ENCODE measurements at regions of chr13 and their contacts with region 1.

Region 1: DNA sequence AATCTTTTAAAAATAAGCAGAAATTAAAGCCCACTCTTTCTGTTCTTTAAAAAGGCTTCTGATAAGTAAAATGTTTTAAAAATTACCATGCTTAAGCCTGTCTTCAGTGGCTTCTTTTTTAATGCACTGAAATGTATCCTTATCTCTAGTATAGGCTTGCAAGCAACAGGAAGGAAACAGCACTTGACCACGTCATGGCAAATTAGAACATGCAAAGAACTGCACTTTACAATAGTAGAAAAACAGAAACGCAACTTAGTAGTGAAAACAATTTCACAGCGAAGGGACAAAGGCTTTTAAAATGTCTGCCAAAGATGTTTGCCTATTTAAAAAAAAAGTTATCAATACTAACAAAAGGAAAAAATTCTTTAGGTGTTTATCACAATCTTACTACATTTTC is 36.3 kb downstream of the ELF1 start:
- DNase-seq: peak; percentile 78 to 90 (median 84)
- H3K4me3 ChIP-seq: peak overlapping the region; percentile 76 to 90
- H3K4me3 Mint-ChIP-seq: peak overlapping the region; percentile 82 to 98 (median 92)
- H3K27ac ChIP-seq: peak overlapping the region; percentile 82
- H3K27ac Mint-ChIP-seq: peak overlapping the region; percentile 95 to 99 (median 97)
- H3K4me1 ChIP-seq: peaks cover 49% of the 10 kb centered on the region
- H3K4me1 Mint-ChIP-seq: peaks cover 38 to 57% (median 45%) of the 10 kb centered on the region in 4 donors
- H3K27me3 ChIP-seq: no peaks in the 10 kb centered on the region
- H3K27me3 Mint-ChIP-seq: no peaks in the 10 kb centered on the region

Region 2: GRCh38 chr13:40770934-40771618 is 211.7 kb before region 1 on chr13 and contains the start of gene MRPS31:
- CTCF ChIA-PET with region 1: no interaction called
- POLR2A ChIA-PET with region 1: no interaction called
- intact Hi-C with region 1: loop called (anchors 2 kb)
- DNase-seq: peak; percentile 91 to 92 (median 92)
- H3K4me3 ChIP-seq: peak within 1 kb of the TSS; percentile 53 to 97
- H3K4me3 Mint-ChIP-seq: peak within 1 kb of the TSS; percentile 97 to 100 (median 99)
- H3K27ac ChIP-seq: peak within 1 kb of the TSS; percentile 79
- H3K27ac Mint-ChIP-seq: peak within 1 kb of the TSS in 6 of 7 donors; percentile 98 to 100 (median 99)
- H3K4me1 ChIP-seq: peaks cover 28% of the 10 kb centered on the region
- H3K4me1 Mint-ChIP-seq: peaks cover 8 to 33% (median 27%) of the 10 kb centered on the region in 4 donors
- H3K27me3 ChIP-seq: no peaks in the 10 kb centered on the region
- H3K27me3 Mint-ChIP-seq: no peaks in the 10 kb centered on the region
- total RNA-seq, gene MRPS31: 37.7 to 39.5 TPM

Region 3: DNA sequence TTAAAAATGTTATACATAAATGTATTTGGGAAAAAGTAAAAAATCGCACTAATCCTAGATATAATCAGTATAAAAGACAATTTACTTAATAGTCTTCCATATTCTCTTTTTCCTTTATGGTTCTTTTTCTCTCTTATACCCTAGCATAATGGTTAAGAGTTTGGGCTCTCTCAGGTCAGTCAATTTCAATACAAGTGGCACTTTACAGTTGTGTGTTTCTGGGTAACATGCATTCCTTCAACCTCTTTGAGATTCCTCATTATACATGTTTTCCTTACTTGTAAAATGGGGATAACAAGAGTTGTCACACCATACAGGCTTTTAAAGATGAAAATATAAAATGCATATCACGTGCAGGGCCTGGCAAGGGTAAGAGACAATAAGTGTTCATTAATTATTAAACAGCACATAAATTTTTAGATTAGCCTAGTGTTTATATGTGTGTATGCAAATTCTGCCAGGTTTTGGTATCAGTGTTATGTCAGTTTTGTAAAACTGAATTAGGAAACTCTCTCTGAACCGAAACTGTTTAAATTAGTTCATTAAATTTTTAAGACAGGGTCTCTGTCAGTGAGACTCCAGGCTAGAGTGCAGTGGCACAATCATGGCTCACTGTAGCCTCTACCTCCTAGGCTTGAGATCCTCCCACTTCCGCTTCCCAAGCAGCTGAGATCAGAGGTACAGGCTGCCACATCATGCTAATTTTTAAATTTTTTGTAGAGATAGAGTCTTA is 13.4 kb before region 1 on chr13:
- CTCF ChIA-PET with region 1: interaction called, 123 read pairs
- POLR2A ChIA-PET with region 1: interaction called, 37 read pairs
- intact Hi-C with region 1: loop called (anchors 1 kb)
- DNase-seq: peak in 1 of 5 donors; percentile 55
- H3K4me3 ChIP-seq: no peak overlapping the region
- H3K4me3 Mint-ChIP-seq: peak overlapping the region; percentile 24 to 76 (median 70)
- H3K27ac ChIP-seq: no peak overlapping the region
- H3K27ac Mint-ChIP-seq: peak overlapping the region; percentile 23 to 87 (median 70)
- H3K4me1 ChIP-seq: peaks cover 100% of the 10 kb centered on the region
- H3K4me1 Mint-ChIP-seq: peaks cover 75 to 99% (median 87%) of the 10 kb centered on the region in 4 donors
- H3K27me3 ChIP-seq: no peaks in the 10 kb centered on the region
- H3K27me3 Mint-ChIP-seq: no peaks in the 10 kb centered on the region

Region 4: DNA sequence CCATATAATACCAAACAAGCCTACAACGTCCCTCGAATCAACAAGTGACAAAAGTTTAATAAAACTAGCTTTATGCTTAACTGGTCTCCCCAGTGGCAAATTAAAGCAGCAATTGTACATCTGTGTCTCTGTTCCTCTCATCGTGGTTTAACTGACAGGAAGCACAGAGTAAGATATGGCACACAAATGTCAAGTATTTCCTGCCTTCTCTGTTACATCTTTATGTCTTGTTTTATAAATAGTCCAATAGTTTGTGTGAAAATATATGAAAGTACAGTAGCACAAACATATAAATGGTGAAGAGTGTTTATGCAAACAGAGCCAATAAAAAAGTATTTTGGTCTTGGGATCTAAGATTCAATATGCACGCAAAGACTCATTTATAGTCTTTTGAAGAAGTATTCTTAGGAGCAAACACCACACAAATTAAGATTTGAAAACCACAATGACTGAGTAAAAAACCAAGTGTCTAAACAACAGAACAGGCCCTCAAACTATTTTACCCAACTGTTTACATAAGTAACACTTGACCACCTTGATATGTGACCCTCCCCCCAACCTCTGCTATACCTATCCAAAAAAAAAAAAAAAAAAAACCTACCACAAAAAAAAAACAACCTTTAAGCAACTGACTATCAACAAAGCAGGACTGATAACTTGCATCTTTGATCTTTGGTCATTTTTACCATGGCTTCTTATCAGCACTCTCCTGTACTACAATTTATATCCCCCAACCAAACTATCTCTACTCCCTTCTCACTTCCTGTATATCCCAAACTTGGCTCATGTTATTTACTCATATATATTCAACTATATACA is 22.3 kb after region 1 on chr13:
- CTCF ChIA-PET with region 1: interaction called, 5 read pairs
- POLR2A ChIA-PET with region 1: interaction called, 31 read pairs
- intact Hi-C with region 1: loop called (anchors 2 kb)
- DNase-seq: peak; percentile 52 to 72 (median 64)
- H3K4me3 ChIP-seq: peak overlapping the region in 1 of 2 donors; percentile 7
- H3K4me3 Mint-ChIP-seq: peak overlapping the region; percentile 38 to 87 (median 62)
- H3K27ac ChIP-seq: peak overlapping the region; percentile 59
- H3K27ac Mint-ChIP-seq: peak overlapping the region; percentile 73 to 94 (median 90)
- H3K4me1 ChIP-seq: peaks cover 93% of the 10 kb centered on the region
- H3K4me1 Mint-ChIP-seq: peaks cover 49 to 79% (median 60%) of the 10 kb centered on the region in 4 donors
- H3K27me3 ChIP-seq: no peaks in the 10 kb centered on the region
- H3K27me3 Mint-ChIP-seq: no peaks in the 10 kb centered on the region

Region 5: GRCh38 chr13:41263261-41264027 is 280.7 kb after region 1 on chr13 and contains the start of gene MTRF1:
- CTCF ChIA-PET with region 1: no interaction called
- POLR2A ChIA-PET with region 1: no interaction called
- intact Hi-C with region 1: loop called (anchors 5 kb)
- DNase-seq: peak; percentile 86 to 89 (median 87)
- H3K4me3 ChIP-seq: peak within 1 kb of the TSS; percentile 80 to 82
- H3K4me3 Mint-ChIP-seq: peak within 1 kb of the TSS; percentile 94 to 99 (median 98)
- H3K27ac ChIP-seq: peak within 1 kb of the TSS; percentile 67
- H3K27ac Mint-ChIP-seq: peak within 1 kb of the TSS; percentile 88 to 99 (median 98)
- H3K4me1 ChIP-seq: peaks cover 19% of the 10 kb centered on the region
- H3K4me1 Mint-ChIP-seq: peaks cover 13 to 18% (median 15%) of the 10 kb centered on the region in 4 donors
- H3K27me3 ChIP-seq: no peaks in the 10 kb centered on the region
- H3K27me3 Mint-ChIP-seq: no peaks in the 10 kb centered on the region
- total RNA-seq, gene MTRF1: 29.5 to 30.1 TPM

Measured in CD4-positive, alpha-beta memory T cell (primary cell).